ENCODE measurements at regions of chr1 and their contacts with region 1.

Region 1: GRCh38 chr1:156129706-156130581 is 15.4 kb downstream of the LMNA start:
- DNase-seq: peak; percentile 94
- H3K4me3 ChIP-seq: peak overlapping the region; percentile 5
- CTCF ChIP-seq: peak; percentile 96

Region 2: GRCh38 chr1:156062189-156062588 is 67.8 kb before region 1 on chr1:
- in situ Hi-C with region 1: no loop called
- DNase-seq: no peak
- H3K4me3 ChIP-seq: no peak overlapping the region
- CTCF ChIP-seq: no peak

Region 3: GRCh38 chr1:156226116-156226538 is 96.2 kb after region 1 on chr1:
- in situ Hi-C with region 1: loop called (anchors 10 kb)
- DNase-seq: no peak
- H3K4me3 ChIP-seq: no peak overlapping the region
- CTCF ChIP-seq: no peak